HCT116 (cell line): ENCODE measurements at regions of chr18 and their contacts with region 1.

Region 1: DNA sequence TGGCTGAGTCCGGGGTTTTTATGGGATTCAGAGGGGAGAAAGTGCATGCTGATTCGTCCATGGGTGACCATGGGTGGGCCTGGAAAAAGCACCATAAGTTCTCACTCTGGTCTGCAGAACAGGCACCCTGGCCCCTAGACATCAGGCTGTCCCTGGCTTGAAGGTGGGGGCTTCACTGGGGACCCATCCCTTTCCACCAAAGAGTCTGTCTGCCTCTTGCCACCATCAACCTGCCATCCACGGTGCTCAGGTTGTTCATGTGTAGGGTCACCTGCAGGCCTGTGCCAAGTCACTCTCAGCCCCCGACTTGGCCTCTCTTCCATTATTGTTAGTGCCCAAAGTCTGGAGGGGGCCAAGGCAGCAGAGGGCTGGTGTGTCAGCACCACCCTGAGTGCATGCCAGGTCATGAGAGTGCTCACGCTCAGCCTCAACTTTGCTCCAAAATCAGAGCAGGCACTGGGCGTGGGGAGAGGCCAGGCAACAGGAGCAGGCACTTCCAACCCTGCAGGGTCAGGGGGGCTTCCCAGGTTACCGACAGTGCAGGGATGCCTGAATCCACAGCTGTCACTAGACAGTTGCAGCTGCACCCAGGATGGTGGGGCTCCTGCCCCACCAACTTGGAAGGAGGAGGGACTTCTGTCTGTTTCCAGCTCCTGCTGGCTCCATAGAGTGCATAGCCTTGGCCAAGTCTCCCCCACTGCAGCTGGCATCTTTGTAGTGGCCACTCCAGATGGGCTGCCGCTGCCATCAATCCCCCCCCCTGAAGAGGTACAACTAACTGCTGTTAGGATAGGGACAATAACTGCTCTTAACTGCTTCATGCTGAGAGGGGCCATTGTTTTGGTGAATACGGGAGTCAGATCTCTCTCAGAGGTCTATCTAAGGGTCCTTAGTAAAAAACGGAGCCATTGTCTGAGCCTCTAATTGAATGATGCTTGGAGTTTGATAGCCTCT is 209.3 kb downstream of the AKAIN1 start:
- DNase-seq: no peak
- ATAC-seq: no peak
- H3K4me3 ChIP-seq: no peak overlapping the region
- H3K27ac ChIP-seq: no peak overlapping the region
- H3K4me1 ChIP-seq: no peaks in the 10 kb centered on the region
- H3K27me3 ChIP-seq: no peaks in the 10 kb centered on the region
- CTCF ChIP-seq: no peak
- POLR2A ChIP-seq: no peak
- RAD21 ChIP-seq: no peak

Region 2: DNA sequence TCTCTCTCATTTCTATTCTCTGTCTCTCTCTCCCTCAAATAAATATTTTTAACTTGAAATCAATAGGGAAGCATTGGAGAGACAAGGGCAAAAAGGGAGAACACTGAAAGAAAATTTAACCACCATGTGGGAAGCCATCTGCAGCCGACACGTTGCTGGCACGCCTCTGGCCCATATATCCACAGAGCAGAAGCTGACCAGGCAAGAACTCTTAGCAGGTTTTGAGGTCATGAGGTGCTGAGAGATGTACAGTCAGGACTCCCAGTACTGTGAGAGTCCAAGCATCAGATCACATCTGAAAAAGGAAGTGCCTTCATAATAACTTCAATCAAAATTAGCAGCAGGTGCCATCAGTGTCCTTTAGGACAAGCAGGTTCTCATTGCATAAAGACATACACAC is 52.7 kb after region 1 on chr18:
- CTCF ChIA-PET with region 1: no interaction called
- POLR2A ChIA-PET with region 1: no interaction called
- RAD21 ChIA-PET with region 1: no interaction called
- intact Hi-C with region 1: loop called (anchors 5 kb)
- DNase-seq: no peak
- ATAC-seq: no peak
- H3K4me3 ChIP-seq: no peak overlapping the region
- H3K27ac ChIP-seq: no peak overlapping the region
- H3K4me1 ChIP-seq: no peaks in the 10 kb centered on the region
- H3K27me3 ChIP-seq: no peaks in the 10 kb centered on the region
- CTCF ChIP-seq: no peak
- POLR2A ChIP-seq: no peak
- RAD21 ChIP-seq: no peak